Adrenal gland (tissue), 19 donors: ENCODE measurements at regions of chr22 and their contacts with region 1.

Region 1: GRCh38 chr22:33126881-33127280 is 68.7 kb upstream of the SYN3 start:
- DNase-seq: peak in 1 of 7 donors; percentile 16
- H3K4me3 ChIP-seq: no peak overlapping the region
- H3K27ac ChIP-seq: no peak overlapping the region
- H3K4me1 ChIP-seq: no peaks in the 10 kb centered on the region
- H3K27me3 ChIP-seq: no peaks in the 10 kb centered on the region
- CTCF ChIP-seq: peak in 4 of 6 experiments; percentile 31 to 50 (median 40)
- POLR2A ChIP-seq: no peak

Region 2: DNA sequence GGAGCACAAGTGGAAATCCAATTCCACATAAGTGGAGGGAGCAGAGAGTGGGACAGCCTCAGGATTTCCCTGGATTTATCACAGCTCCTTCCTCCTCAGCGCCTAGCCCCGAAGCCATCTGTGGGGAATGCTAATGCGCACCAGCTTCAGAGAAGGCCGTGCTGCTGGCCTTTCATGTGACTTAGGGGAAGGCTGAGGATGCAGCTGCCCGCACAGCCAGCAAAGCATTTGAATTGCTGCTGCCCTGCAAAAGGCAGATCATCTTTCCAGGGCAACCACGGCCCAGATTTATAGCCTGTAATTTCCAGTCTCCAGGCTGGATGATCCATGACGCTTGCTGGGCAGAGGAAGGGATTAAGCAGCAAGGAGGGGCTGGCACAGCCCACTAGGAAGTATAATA is 98.6 kb before region 1 on chr22:
- intact Hi-C with region 1: loop called in 1 of 2 experiments (anchors 10 kb)
- DNase-seq: no peak
- H3K4me3 ChIP-seq: no peak overlapping the region
- H3K27ac ChIP-seq: no peak overlapping the region
- H3K4me1 ChIP-seq: no peaks in the 10 kb centered on the region
- H3K27me3 ChIP-seq: no peaks in the 10 kb centered on the region
- CTCF ChIP-seq: no peak
- POLR2A ChIP-seq: no peak